Activated CD4-positive, alpha-beta memory T cell treated with anti-CD3 and anti-CD28 coated beads for 36 hours (primary cell): ENCODE measurements at regions of chr2 and their contacts with region 1.

Region 1: GRCh38 chr2:127563458-127564428 is 28.3 kb downstream of the MYO7B start:
- DNase-seq: peak; percentile 52
- H3K4me3 Mint-ChIP-seq: no peak overlapping the region
- H3K27ac Mint-ChIP-seq: no peak overlapping the region
- H3K4me1 Mint-ChIP-seq: peaks cover 16% of the 10 kb centered on the region
- H3K27me3 Mint-ChIP-seq: peaks cover 16% of the 10 kb centered on the region

Region 2: GRCh38 chr2:127313406-127313805 is 250.3 kb before region 1 on chr2:
- CTCF ChIA-PET with region 1: no interaction called
- POLR2A ChIA-PET with region 1: no interaction called
- intact Hi-C with region 1: no loop called
- DNase-seq: no peak
- H3K4me3 Mint-ChIP-seq: no peak overlapping the region
- H3K27ac Mint-ChIP-seq: no peak overlapping the region
- H3K4me1 Mint-ChIP-seq: no peaks in the 10 kb centered on the region
- H3K27me3 Mint-ChIP-seq: no peaks in the 10 kb centered on the region

Region 3: DNA sequence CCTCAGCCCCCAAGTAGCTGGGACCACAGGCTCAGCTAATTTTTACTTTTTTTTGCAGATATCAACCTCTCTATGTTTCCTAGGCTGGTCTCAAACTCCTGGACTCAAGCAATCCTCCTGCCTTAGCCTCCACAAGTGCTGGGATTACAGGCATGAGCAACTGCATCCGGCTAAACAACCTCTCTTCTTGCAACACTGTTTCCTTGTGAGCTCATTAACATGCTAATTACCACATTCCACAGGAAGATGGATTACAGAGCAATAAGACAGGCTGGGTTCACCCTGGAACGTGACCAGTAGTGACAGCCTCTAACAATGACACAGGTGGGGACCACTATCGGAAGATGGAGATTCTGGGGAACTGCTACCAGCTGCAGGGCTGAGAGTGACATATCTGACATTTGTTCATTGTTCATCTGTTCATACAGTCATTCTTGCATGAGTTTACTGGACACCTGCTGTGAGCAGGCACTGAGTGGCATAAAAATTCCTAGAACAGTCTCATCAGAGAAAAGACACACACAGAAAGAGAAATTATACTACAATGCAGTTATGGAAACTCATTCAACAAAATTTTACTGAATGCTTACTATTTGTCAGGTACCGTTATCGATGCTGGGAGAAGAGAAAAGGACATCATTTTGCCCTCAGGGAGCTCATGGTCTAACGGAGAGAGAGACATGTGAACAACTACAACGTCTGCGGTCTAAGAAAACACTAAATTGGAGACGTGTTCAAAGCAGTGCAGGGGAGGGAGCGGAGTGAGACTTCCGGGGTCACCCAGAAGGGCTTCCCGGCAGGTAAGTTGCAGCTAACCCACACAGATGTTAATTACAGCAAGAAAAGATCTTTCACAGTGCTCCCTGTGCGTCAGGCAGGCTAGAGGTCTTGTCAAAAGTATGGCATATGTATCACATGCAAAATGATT is 107.9 kb before region 1 on chr2:
- CTCF ChIA-PET with region 1: interaction called, 4 read pairs
- POLR2A ChIA-PET with region 1: no interaction called
- intact Hi-C with region 1: loop called (anchors 5 kb)
- DNase-seq: peak; percentile 60
- H3K4me3 Mint-ChIP-seq: peak overlapping the region; percentile 5
- H3K27ac Mint-ChIP-seq: peak overlapping the region; percentile 74
- H3K4me1 Mint-ChIP-seq: peaks cover 25% of the 10 kb centered on the region
- H3K27me3 Mint-ChIP-seq: peaks cover 3% of the 10 kb centered on the region

Region 4: DNA sequence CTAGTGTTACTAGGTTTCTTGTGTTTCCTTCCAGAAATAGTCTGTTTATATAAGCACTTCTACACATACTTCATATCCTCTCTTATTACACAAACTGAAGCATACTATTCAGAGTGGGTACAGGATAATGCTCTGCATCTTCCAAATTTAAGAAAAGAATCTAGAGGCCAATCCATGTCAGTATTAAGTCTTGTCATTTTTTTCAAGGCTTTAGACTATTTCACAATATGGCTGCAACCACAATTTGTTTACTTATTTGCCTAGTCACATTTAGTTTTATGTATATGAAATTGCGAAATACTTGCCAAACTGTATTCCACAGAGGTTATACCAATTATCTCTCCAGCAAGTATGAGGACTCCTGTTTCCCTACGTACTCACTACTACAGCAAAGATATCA is 65.4 kb before region 1 on chr2:
- CTCF ChIA-PET with region 1: no interaction called
- POLR2A ChIA-PET with region 1: no interaction called
- intact Hi-C with region 1: loop called (anchors 2 kb)
- DNase-seq: no peak
- H3K4me3 Mint-ChIP-seq: no peak overlapping the region
- H3K27ac Mint-ChIP-seq: no peak overlapping the region
- H3K4me1 Mint-ChIP-seq: peaks cover 12% of the 10 kb centered on the region
- H3K27me3 Mint-ChIP-seq: no peaks in the 10 kb centered on the region

Region 5: DNA sequence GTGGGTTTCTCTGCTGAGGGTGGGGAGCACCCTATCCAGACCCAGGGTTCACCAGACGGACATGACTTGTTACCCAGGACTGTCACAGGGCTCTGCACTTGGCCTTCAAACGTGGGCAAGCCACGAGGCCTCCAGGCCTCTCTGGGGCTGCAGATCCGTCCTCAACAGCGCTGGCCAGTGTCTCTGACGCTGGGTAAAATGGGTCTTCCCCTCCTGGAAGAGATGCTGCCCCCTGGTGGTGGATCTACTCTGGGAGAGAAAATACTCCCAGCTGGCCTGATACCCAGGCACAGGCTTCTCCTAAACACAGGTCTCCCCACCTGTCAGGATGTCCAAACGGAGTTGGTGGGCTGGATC is 85.9 kb after region 1 on chr2:
- CTCF ChIA-PET with region 1: no interaction called
- POLR2A ChIA-PET with region 1: no interaction called
- intact Hi-C with region 1: no loop called
- DNase-seq: peak; percentile 83
- H3K4me3 Mint-ChIP-seq: no peak overlapping the region
- H3K27ac Mint-ChIP-seq: no peak overlapping the region
- H3K4me1 Mint-ChIP-seq: peaks cover 7% of the 10 kb centered on the region
- H3K27me3 Mint-ChIP-seq: no peaks in the 10 kb centered on the region